Activated T-helper 1 cell treated with anti-CD3 and anti-CD28 coated beads, Interleukin-12 subunit alpha, Interleukin-12 subunit beta, Interleukin-2, Interleukin-4 antibody, amounts not matched to agents 30 ng/mL and 10 ng/mL and 1 ng/mL, durations not matched to agents 14 hours and 24 hours and 36 hours (primary cell): ENCODE measurements at regions of chr1 and their contacts with region 1.

Region 1: GRCh38 chr1:109667452-109668122 is at the start of gene GSTM2:
- DNase-seq: peak; percentile 83
- H3K4me3 Mint-ChIP-seq: peak within 1 kb of the TSS; percentile 73
- H3K27ac Mint-ChIP-seq: no peak within 1 kb of the TSS
- H3K4me1 Mint-ChIP-seq: peaks cover 16% of the 10 kb centered on the region
- H3K27me3 Mint-ChIP-seq: no peaks in the 10 kb centered on the region
- total RNA-seq, gene GSTM2: 19.0 and 19.2 TPM in 2 replicates

Region 2: DNA sequence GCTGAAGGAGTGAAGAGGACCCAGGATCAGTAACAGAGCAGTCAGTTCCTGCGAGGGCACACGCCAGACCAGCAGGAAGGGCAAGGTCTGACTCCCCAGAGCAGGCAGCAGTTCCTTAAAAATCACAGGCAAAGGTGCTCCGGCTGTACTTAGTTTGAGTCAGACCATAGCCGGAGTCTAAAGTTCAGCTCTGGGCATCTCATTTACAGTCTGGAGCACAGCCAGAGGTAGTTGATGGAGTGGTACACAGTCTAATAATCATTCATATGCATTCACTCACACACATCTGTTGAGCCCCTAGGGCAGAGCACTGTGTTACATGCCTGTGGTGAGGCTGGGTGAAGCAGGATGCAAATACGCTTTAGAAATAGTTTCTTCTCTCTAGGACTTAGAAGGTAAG is 150.7 kb before region 1 on chr1:
- intact Hi-C with region 1: no loop called
- DNase-seq: no peak
- H3K4me3 Mint-ChIP-seq: no peak overlapping the region
- H3K27ac Mint-ChIP-seq: no peak overlapping the region
- H3K4me1 Mint-ChIP-seq: no peaks in the 10 kb centered on the region
- H3K27me3 Mint-ChIP-seq: peaks cover 19% of the 10 kb centered on the region

Region 3: GRCh38 chr1:109655601-109656519 is 11.7 kb before region 1 on chr1 and contains the start of gene GSTM4:
- intact Hi-C with region 1: loop called (anchors 1 kb)
- DNase-seq: peak; percentile 56
- H3K4me3 Mint-ChIP-seq: peak within 1 kb of the TSS; percentile 95
- H3K27ac Mint-ChIP-seq: peak within 1 kb of the TSS; percentile 92
- H3K4me1 Mint-ChIP-seq: peaks cover 15% of the 10 kb centered on the region
- H3K27me3 Mint-ChIP-seq: peaks cover 19% of the 10 kb centered on the region
- total RNA-seq, gene GSTM4: 6.5 and 8.9 TPM in 2 replicates

Region 4: GRCh38 chr1:109687616-109688499 is 20.3 kb after region 1 on chr1 and contains the start of gene GSTM1:
- intact Hi-C with region 1: loop called (anchors 2 kb)
- DNase-seq: peak; percentile 86
- H3K4me3 Mint-ChIP-seq: peak within 1 kb of the TSS; percentile 93
- H3K27ac Mint-ChIP-seq: peak within 1 kb of the TSS; percentile 98
- H3K4me1 Mint-ChIP-seq: peaks cover 20% of the 10 kb centered on the region
- H3K27me3 Mint-ChIP-seq: peaks cover 4% of the 10 kb centered on the region
- total RNA-seq, gene GSTM1: 77.4 and 86.4 TPM in 2 replicates

Region 5: DNA sequence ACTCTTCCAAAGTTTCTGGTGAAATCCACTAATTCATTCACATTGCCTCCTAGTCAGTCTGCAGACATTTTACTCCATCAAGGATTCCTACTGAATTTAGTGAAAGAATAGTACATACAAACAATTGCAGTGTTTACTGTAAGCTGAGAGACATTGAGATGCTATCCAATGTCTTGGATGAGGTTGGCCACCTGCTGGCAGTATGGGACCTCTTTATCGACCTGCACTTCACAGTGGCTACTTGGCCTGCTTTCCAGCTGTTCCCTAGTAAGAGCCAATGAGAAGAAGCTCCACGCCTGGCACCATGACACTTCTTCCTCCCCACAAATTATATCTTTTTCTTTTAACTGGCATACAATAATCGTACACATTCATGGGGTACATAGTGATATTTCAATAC is 1347.6 kb after region 1 on chr1:
- intact Hi-C with region 1: no loop called
- DNase-seq: no peak
- H3K4me3 Mint-ChIP-seq: no peak overlapping the region
- H3K27ac Mint-ChIP-seq: no peak overlapping the region
- H3K4me1 Mint-ChIP-seq: no peaks in the 10 kb centered on the region
- H3K27me3 Mint-ChIP-seq: peaks cover 19% of the 10 kb centered on the region